GM12878 (cell line): ENCODE measurements at regions of chr2 and their contacts with region 1.

Region 1: GRCh38 chr2:61538200-61538919 is at the start of gene XPO1:
- DNase-seq: peak; percentile 95
- ATAC-seq: peak; percentile 90
- H3K4me3 ChIP-seq: peak within 1 kb of the TSS; percentile 84
- H3K27ac ChIP-seq: peak within 1 kb of the TSS; percentile 99
- H3K4me1 ChIP-seq: peaks cover 5% of the 10 kb centered on the region
- H3K27me3 ChIP-seq: no peaks in the 10 kb centered on the region
- CTCF ChIP-seq: 0 out of 6 replicates have a peak, but pooled peaks of 1 of the 3 experiments have one; percentile 2
- EP300 ChIP-seq: peak; percentile 20 to 48; a peak in 2 of 4 replicates
- POLR2A ChIP-seq: peak; percentile 96
- RAD21 ChIP-seq: no peak
- polyA plus RNA-seq, gene XPO1: 57.3 to 62.8 TPM

Region 2: DNA sequence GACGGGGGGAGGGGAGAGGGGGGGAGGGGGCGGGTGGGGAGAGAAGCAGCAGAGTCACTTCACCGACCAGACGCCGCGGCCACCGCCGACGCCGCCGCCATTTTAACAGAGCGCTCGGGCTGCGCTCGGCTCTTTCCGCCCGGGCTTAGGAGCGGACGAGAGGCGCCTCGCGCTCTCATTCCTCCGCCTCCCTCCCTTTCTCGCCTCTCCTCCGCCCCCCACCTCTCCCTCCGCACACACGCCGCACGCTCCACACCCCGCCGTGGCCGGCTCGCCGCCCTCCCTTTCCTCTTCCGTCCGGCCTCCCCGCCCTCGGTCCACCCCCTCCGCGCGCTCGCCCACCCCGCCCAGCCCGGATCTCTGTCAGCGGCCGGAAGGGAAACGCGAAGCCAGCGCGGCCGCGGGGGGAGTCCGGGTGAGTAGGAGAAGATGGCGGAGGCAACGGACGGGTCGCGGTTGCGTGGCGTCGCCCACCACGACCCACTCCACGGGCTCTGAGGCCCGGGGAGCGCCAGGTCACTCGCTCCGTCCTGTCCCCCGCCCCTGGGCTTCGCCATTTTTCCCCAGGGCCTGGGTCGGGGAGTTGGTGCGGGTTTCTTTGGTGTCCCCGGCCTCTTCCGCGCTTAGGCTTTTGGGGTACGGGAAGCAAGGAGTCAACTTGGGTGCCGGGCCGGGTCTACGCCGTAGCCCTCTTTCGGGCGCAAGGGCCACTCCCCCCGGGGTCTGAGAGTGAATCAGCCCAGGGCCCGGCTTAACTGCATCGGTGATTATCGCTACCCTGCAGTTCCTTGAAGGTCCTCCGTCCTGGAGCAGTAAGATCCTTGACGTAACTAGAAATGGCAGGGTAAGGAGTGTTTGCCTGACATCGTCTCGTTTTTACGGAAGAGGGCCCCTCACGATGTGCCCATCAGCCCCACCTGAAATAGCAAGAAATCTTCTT is 67.1 kb before region 1 on chr2 and contains the start of gene USP34:
- CTCF ChIA-PET with region 1: interaction called, 3 read pairs
- POLR2A ChIA-PET with region 1: interaction called, 5 read pairs
- RAD21 ChIA-PET with region 1: interaction called, 3 read pairs
- SMC1A ChIA-PET with region 1: interaction called, 4 read pairs
- in situ Hi-C with region 1: no loop called
- intact Hi-C with region 1: loop called (anchors 2 kb)
- DNase-seq: peak; percentile 87
- ATAC-seq: peak; percentile 93
- H3K4me3 ChIP-seq: peak within 1 kb of the TSS; percentile 98
- H3K27ac ChIP-seq: peak within 1 kb of the TSS; percentile 97
- H3K4me1 ChIP-seq: no peaks in the 10 kb centered on the region; the same call in 1 of the 2 replicates
- H3K27me3 ChIP-seq: no peaks in the 10 kb centered on the region
- CTCF ChIP-seq: no peak
- EP300 ChIP-seq: no peak
- POLR2A ChIP-seq: peak; percentile 96
- RAD21 ChIP-seq: no peak
- polyA plus RNA-seq, gene USP34: 26.2 to 30.6 TPM

Region 3: DNA sequence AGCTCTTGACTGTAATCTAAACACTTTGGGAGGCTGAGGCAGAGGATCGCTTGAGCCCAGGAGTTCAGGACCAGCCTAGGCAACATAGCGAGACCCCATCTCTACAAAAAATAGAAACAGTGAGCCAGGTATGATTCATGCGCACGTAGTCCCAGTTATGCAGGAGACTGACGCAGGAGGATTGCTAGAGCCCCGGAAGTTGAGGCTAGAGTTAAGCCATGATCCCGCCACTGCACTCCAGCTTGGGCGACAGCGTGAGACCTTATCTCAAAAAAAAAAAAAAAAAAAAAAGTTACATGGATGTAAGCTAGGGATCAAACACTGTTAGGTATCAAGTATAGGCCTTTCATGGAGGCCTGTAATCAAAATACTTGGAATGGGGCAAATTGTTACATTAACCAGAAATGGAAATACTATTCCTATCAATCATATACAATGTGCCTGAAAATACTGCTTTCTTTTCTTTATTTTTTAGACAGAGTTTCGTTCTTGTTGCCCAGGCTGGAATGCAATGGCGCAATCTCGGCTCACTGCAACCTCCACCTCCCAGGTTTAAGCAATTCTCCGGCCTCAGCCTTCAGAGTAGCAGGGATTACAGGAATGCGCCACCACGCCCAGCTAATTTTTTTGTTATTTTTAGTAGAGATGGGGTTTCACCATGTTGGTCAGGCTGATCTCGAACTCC is 27.5 kb before region 1 on chr2:
- CTCF ChIA-PET with region 1: no interaction called
- POLR2A ChIA-PET with region 1: interaction called, 8 read pairs
- RAD21 ChIA-PET with region 1: interaction called, 3 read pairs
- SMC1A ChIA-PET with region 1: interaction called, 11 read pairs
- in situ Hi-C with region 1: no loop called
- intact Hi-C with region 1: no loop called
- DNase-seq: no peak
- ATAC-seq: no peak
- H3K4me3 ChIP-seq: no peak overlapping the region
- H3K27ac ChIP-seq: no peak overlapping the region
- H3K4me1 ChIP-seq: no peaks in the 10 kb centered on the region
- H3K27me3 ChIP-seq: no peaks in the 10 kb centered on the region
- CTCF ChIP-seq: no peak
- EP300 ChIP-seq: no peak
- POLR2A ChIP-seq: no peak; the same call in 1 of the 2 replicates
- RAD21 ChIP-seq: no peak

Region 4: DNA sequence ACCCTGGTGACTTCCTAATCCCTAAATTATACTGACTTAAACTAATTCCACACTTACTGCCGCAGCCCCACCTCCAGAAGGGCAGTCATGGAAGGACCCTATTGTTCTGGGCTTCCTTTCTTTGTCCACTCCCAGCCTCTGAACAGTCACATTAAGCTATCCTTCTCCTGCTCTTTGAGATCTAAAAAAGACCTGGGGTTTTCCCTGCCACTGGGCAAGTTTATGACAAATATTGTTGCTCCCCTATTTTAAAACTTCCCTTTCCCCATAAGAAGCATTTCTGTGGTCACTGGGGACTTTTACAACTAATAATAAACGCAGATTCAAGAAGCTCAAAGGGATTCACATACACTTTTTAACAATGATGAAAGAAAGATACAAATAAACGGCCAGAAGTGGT is 47.0 kb after region 1 on chr2:
- CTCF ChIA-PET with region 1: no interaction called
- POLR2A ChIA-PET with region 1: interaction called, 5 read pairs
- RAD21 ChIA-PET with region 1: interaction called, 14 read pairs
- SMC1A ChIA-PET with region 1: interaction called, 8 read pairs
- in situ Hi-C with region 1: no loop called
- intact Hi-C with region 1: loop called (anchors 5 kb)
- DNase-seq: peak; percentile 48
- ATAC-seq: peak; percentile 81
- H3K4me3 ChIP-seq: peak overlapping the region; percentile 30; the same call in 1 of the 2 replicates
- H3K27ac ChIP-seq: peak overlapping the region; percentile 28; the same call in 1 of the 2 replicates
- H3K4me1 ChIP-seq: peaks cover 7% of the 10 kb centered on the region
- H3K27me3 ChIP-seq: no peaks in the 10 kb centered on the region
- CTCF ChIP-seq: no peak
- EP300 ChIP-seq: peak in 1 of 2 experiments; percentile 37; a peak in 1 of 4 replicates
- POLR2A ChIP-seq: no peak
- RAD21 ChIP-seq: no peak

Region 5: GRCh38 chr2:61658841-61659780 is 120.8 kb after region 1 on chr2:
- CTCF ChIA-PET with region 1: interaction called, 8 read pairs
- POLR2A ChIA-PET with region 1: interaction called, 5 read pairs
- RAD21 ChIA-PET with region 1: interaction called, 7 read pairs
- SMC1A ChIA-PET with region 1: interaction called, 6 read pairs
- in situ Hi-C with region 1: no loop called
- intact Hi-C with region 1: loop called (anchors 10 kb)
- DNase-seq: peak; percentile 27
- ATAC-seq: peak; percentile 98
- H3K4me3 ChIP-seq: no peak overlapping the region
- H3K27ac ChIP-seq: no peak overlapping the region
- H3K4me1 ChIP-seq: no peaks in the 10 kb centered on the region
- H3K27me3 ChIP-seq: no peaks in the 10 kb centered on the region
- CTCF ChIP-seq: peak; percentile 48 to 67 (median 60); a peak in 5 of 6 replicates
- EP300 ChIP-seq: no peak
- POLR2A ChIP-seq: no peak
- RAD21 ChIP-seq: peak; percentile 89

Region 6: GRCh38 chr2:61764035-61764800 is 225.9 kb after region 1 on chr2:
- CTCF ChIA-PET with region 1: no interaction called
- POLR2A ChIA-PET with region 1: no interaction called
- RAD21 ChIA-PET with region 1: no interaction called
- SMC1A ChIA-PET with region 1: no interaction called
- in situ Hi-C with region 1: no loop called
- intact Hi-C with region 1: loop called (anchors 10 kb)
- DNase-seq: peak; percentile 93
- ATAC-seq: peak; percentile 99
- H3K4me3 ChIP-seq: peak overlapping the region; percentile 71
- H3K27ac ChIP-seq: peak overlapping the region; percentile 96
- H3K4me1 ChIP-seq: peaks cover 4% of the 10 kb centered on the region
- H3K27me3 ChIP-seq: no peaks in the 10 kb centered on the region; a peak in 1 of 4 replicates
- CTCF ChIP-seq: no peak
- EP300 ChIP-seq: peak in 1 of 2 experiments; percentile 38; a peak in 1 of 4 replicates
- POLR2A ChIP-seq: peak; percentile 93
- RAD21 ChIP-seq: 0 out of 2 replicates have a peak, but pooled peaks have one; percentile 2

Region 7: DNA sequence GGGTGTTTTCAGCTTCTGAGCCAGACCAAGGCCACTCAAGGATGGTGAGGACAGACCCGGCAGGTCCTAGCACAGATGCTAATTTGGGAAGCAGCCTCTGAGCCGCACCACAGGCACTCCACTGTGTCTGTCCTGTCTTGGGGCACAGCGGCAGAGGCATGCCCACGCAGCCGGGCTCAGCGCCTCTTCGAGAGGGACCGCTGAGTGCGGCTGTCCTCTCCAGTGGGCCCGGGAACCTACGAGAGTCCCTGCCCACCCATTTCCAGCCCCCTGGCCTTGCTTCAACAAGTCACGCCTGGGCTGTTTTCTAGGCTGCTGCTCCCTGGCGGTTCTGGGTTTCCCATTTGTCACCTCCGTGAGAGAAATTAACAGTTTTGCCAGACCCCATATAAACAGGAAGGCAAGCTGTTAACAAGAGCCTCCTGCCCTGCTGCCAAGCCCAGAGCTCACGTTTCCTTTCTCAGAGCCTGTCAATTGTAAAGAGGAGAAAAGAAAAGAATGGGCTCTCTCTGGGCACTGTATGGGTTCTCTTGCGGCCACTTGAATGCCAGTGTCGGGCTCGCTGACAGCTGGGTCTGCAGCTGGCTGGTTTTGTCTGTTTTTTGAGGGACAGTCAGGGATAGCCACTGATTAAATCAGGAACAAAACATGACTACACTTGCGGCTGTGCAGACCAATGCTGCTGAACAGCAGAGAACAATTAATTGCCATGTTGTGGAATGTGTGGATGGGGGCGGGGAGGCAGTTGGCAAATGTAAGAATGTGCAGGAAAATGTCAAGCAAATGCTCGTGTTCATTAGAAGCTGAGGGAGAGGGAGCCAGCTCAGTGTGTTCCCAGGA is 937.0 kb after region 1 on chr2:
- CTCF ChIA-PET with region 1: no interaction called
- POLR2A ChIA-PET with region 1: no interaction called
- RAD21 ChIA-PET with region 1: no interaction called
- SMC1A ChIA-PET with region 1: no interaction called
- in situ Hi-C with region 1: no loop called
- intact Hi-C with region 1: no loop called
- DNase-seq: no peak
- ATAC-seq: no peak
- H3K4me3 ChIP-seq: no peak overlapping the region
- H3K27ac ChIP-seq: no peak overlapping the region
- H3K4me1 ChIP-seq: no peaks in the 10 kb centered on the region
- H3K27me3 ChIP-seq: no peaks in the 10 kb centered on the region; a peak in 1 of 4 replicates
- CTCF ChIP-seq: no peak
- EP300 ChIP-seq: no peak
- POLR2A ChIP-seq: no peak
- RAD21 ChIP-seq: no peak